Calu3 (cell line): ENCODE measurements at regions of chr2 and their contacts with region 1.

Region 1: GRCh38 chr2:227817850-227818674 is 4.4 kb downstream of the CCL20 start:
- DNase-seq: peak; percentile 94
- H3K4me3 Mint-ChIP-seq: peak overlapping the region; percentile 72
- H3K27ac Mint-ChIP-seq: peak overlapping the region; percentile 98
- H3K4me1 Mint-ChIP-seq: peaks cover 61% of the 10 kb centered on the region
- H3K27me3 Mint-ChIP-seq: peaks cover 9% of the 10 kb centered on the region
- CTCF ChIP-seq: no peak

Region 2: DNA sequence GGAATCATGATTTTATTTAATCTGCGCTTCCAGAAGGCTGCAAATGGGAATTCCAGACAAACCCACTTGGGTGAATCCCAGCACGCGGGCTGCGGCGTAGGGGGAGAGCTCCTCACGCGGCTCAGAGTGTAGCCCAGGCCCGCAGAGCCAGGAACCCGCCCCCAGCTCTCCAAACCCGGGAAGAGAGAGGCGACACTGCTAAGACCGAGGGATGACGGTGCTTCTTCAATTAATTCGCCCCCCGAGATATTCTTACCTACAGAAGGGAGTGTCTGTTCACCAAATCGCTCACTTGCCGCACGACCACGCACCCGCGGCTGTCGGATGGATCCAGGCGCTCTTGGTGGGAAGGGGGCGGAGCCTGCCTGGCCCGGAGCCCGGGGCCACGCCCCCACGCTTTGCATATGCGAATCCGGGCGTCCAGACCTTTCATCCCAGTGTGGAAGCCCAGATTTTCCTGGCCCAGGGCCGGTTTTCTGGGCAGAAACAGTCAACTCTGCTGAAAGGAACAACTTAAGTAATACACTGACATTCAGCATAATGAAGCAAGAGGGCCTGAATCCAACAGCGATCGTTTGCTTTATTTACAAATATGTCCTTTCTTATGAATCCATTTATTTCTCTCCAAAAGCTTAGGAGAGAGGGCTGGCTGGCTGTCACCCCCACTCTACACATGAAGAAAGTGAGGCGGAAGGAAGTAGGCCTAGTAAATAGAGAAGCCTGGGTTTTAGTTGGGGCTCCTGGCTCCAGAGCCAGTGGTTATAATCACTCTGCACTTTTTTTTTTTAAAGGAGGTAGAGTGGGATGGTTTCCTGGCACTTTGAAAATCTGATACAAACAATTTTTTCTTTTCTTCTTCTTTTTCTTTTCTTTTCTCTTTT is 100.1 kb before region 1 on chr2 and contains the start of gene SLC19A3:
- CTCF ChIA-PET with region 1: interaction called, 3 read pairs
- intact Hi-C with region 1: loop called (anchors 5 kb)
- DNase-seq: peak; percentile 95
- H3K4me3 Mint-ChIP-seq: peak within 1 kb of the TSS; percentile 75
- H3K27ac Mint-ChIP-seq: peak within 1 kb of the TSS; percentile 63
- H3K4me1 Mint-ChIP-seq: peaks cover 52% of the 10 kb centered on the region
- H3K27me3 Mint-ChIP-seq: no peaks in the 10 kb centered on the region
- CTCF ChIP-seq: no peak
- total RNA-seq, gene SLC19A3: 63.8 and 82.4 TPM in 2 replicates

Region 3: DNA sequence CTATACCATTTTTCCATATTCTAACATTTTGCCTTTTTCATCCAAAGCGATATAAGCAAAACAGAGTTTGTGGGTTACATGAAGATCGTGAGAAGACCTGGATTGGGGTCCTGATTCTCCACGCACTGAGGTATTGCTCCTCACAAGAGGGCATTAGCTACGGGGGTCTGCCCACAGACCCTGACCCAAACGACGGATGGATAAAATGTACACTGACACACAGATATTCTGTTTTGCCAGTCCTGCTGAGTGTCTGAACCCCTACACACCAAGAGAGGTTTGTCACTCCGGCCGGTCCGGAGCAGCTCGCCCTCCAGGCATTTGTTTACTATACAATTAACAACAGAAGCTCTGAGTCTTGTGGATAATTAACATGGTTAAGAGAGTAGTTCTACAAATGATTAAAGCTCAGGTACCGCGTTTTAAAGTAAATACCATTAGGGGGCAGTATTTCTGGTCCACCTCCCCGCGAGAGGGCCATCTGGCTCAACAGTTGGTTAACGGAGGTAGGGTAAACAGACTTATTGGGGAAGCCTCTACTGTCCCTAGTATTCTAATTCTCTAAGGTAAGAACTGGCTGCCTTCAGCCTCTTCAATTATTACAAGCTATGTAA is 43.9 kb before region 1 on chr2:
- CTCF ChIA-PET with region 1: interaction called, 7 read pairs
- intact Hi-C with region 1: loop called (anchors 2 kb)
- DNase-seq: peak; percentile 36
- H3K4me3 Mint-ChIP-seq: no peak overlapping the region
- H3K27ac Mint-ChIP-seq: no peak overlapping the region
- H3K4me1 Mint-ChIP-seq: peaks cover 38% of the 10 kb centered on the region
- H3K27me3 Mint-ChIP-seq: no peaks in the 10 kb centered on the region
- CTCF ChIP-seq: peak; percentile 65

Region 4: DNA sequence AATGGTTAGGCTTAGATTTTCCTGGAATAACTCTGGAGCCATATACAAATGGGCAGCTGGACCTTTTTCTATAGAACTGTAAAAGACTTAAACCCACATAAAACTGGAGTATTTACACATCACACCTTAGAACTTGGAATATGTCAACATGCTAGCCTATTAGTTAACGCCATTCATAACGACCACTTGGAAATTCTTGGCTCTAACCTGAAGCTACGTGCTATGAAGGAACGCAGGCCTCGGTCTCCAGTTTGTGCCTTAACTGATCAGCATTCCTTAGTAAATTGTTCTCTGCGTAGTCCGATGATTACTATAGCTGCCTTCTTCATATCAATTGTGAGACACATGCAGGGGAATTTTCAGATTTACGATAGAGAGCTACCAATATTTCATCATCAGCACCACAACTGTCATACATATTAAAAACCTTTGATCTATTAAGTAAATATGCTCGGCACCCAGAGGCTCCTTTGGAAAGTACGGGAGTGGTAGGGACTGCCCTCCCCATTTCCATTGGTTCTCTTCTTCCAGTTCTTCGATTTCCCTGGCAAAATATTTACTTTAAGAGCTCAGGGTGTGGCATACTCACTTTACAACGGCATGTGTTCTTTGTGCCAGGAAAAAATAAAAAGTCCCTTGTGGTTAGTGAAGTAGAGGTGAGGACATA is 21.9 kb before region 1 on chr2:
- CTCF ChIA-PET with region 1: interaction called, 7 read pairs
- intact Hi-C with region 1: loop called (anchors 1 kb)
- DNase-seq: peak; percentile 65
- H3K4me3 Mint-ChIP-seq: peak overlapping the region; percentile 29
- H3K27ac Mint-ChIP-seq: peak overlapping the region; percentile 93
- H3K4me1 Mint-ChIP-seq: peaks cover 38% of the 10 kb centered on the region
- H3K27me3 Mint-ChIP-seq: no peaks in the 10 kb centered on the region
- CTCF ChIP-seq: no peak

Region 5: DNA sequence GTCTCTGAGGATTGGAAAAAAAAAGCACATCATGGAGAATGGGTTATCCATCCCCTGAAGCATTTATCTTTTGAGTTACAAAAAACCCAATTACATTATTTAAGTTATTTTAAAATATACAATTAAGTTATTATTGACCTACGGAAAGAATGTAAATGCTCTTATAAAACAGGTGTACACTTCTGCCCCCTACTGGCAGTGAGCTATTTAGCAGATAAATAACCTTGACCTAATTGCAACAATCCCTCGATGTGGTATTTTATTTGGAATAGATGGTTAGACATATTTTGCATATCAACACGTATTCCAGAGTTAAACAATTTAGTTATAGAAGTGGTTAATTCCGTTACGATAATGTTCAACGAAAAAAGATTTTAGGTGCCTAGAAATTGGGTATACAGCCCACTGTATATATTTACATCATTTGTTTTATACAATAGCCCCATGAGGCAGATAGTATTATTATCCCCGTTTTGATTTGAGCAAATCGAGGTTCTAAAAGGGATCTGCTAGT is 44.2 kb after region 1 on chr2:
- CTCF ChIA-PET with region 1: interaction called, 21 read pairs
- intact Hi-C with region 1: loop called (anchors 1 kb)
- DNase-seq: peak; percentile 63
- H3K4me3 Mint-ChIP-seq: no peak overlapping the region
- H3K27ac Mint-ChIP-seq: peak overlapping the region; percentile 69
- H3K4me1 Mint-ChIP-seq: peaks cover 38% of the 10 kb centered on the region
- H3K27me3 Mint-ChIP-seq: no peaks in the 10 kb centered on the region
- CTCF ChIP-seq: peak; percentile 49

Region 6: DNA sequence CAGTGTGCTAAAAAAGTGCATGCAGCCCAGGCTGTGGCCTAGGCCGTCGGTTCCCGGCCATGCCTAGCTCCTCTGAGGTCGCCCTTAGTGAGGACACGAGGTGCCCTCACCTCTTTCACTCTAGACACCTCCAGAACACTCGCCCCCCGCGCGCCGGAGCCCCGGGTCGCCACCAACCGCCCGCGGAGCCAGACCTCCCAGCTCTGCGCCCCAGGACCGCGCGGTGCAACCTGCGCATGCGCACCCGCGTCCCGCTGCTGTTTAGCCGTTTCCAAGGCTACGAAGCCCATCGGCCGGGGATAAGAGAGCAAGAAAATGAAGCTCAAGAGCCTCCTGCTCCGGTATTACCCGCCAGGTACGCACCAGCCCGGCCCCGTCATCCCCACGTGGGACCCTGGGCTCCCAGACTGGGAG is 53.3 kb after region 1 on chr2 and contains the start of gene DAW1:
- CTCF ChIA-PET with region 1: interaction called, 5 read pairs
- intact Hi-C with region 1: loop called (anchors 2 kb)
- DNase-seq: peak; percentile 89
- H3K4me3 Mint-ChIP-seq: peak within 1 kb of the TSS; percentile 72
- H3K27ac Mint-ChIP-seq: peak within 1 kb of the TSS; percentile 96
- H3K4me1 Mint-ChIP-seq: peaks cover 56% of the 10 kb centered on the region
- H3K27me3 Mint-ChIP-seq: no peaks in the 10 kb centered on the region
- CTCF ChIP-seq: no peak
- total RNA-seq, gene DAW1: 2.4 and 3.2 TPM in 2 replicates